H1 (cell line): ENCODE measurements at regions of chr2 and their contacts with region 1.

Region 1: DNA sequence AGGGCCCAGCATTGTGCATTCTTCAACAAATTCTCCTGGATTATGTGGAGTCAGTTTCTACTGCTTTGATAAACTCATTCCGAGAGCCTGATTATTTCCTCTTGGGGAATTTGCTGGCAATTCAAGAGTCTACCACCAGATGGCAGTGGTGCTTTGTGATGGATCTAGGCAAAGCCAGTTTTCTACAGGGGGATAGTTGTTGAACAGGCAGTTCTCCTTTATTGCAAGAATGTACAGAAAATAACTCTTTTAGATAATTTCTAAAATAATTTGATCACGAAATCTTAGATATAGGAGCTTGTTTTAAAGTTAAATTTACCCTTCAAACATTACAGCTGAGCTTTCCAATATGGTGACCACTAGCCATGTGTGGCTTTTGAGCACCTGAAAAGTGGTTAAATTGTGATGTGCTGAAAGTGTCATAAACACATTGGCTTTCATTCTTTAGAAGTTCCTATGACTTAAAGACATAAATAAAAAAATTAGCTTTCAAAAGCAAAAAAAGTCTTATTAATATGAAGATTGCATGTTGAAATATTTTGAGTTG is 66.7 kb upstream of the HAAO start:
- DNase-seq: peak; percentile 19 to 94
- H3K4me3 ChIP-seq: no peak overlapping the region
- H3K27ac ChIP-seq: no peak overlapping the region
- H3K4me1 ChIP-seq: no peaks in the 10 kb centered on the region; a peak in 1 of 7 replicates
- H3K27me3 ChIP-seq: no peaks in the 10 kb centered on the region
- CTCF ChIP-seq: peak in 2 of 3 experiments; percentile 79 to 85; a peak in 3 of 4 replicates
- EP300 ChIP-seq: no peak
- POLR2A ChIP-seq: no peak
- RAD21 ChIP-seq: peak; percentile 96 to 97

Region 2: DNA sequence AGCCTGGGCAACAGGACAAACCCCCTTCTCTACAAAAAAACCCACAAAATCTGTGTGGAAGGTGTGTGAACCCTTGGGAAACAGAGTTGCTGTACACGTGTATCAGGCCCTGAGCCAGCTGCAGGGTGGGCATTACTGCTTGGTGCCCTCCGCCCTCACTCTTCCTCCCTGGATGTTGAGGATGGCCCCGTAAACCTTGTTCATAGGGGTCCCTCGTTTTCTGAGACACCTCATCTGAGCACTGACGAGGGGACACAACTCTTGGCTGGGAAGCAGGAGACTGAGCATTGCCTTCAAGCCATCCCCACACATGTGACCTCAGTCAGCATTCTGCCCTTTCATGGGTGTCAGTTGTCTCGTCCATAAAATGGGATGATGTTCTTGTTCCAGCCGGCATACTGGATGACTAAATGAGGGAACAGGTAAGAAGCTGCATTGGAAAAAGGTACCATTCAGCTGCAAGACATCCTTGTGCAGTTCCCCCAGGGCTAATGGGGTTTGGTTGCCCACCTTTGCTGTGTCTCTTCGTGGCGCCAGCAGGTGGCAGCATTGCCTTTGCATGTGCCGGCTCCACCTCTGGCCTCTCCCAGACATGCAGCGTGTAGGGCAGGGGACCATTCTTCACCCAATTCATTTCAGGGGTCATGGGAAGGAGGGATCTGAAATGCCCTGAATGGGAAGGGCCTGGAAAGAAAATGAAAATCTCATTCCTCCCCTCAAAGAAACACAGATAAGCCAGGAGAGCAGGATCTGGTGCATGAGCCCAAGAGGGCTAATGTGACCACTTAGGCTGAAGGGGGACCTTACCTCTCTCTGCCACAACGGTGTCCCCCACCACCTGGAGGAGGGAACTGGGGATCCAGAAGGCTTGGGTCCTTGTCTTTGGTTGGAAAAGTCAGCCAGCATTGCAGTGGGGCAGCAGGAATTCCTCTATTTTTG is 30.3 kb before region 1 on chr2:
- CTCF ChIA-PET with region 1: interaction called, 119 read pairs
- POLR2A ChIA-PET with region 1: no interaction called
- DNase-seq: peak; percentile 49 to 88
- H3K4me3 ChIP-seq: no peak overlapping the region
- H3K27ac ChIP-seq: no peak overlapping the region
- H3K4me1 ChIP-seq: no peaks in the 10 kb centered on the region; a peak in 2 of 7 replicates
- H3K27me3 ChIP-seq: peaks cover 0 to 9% (median 5%) of the 10 kb centered on the region in 4 experiments; a peak in 5 of 7 replicates
- CTCF ChIP-seq: peak; percentile 97 to 99 (median 98)
- EP300 ChIP-seq: no peak
- POLR2A ChIP-seq: no peak
- RAD21 ChIP-seq: peak; percentile 94 to 96

Region 3: DNA sequence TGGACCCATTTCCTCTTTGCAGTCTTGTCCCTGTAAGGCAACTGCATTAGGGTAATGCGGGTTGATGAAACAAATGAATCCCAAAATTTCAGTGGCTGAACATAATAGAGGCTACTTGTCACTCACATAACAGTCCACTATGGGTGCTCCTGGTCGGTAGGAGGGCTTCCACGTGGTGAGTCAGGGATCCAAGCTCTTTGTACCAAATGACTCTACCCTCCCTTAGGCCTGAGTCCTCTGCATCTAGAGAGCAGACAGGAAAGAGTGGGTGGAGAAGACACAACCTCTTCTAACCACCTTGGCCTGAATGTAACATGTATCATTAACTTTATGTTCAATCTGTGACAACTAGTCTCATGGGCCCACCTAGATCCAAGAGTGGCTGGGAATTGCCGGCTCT is 19.5 kb after region 1 on chr2:
- CTCF ChIA-PET with region 1: interaction called, 24 read pairs
- POLR2A ChIA-PET with region 1: interaction called, 3 read pairs
- DNase-seq: no peak
- H3K4me3 ChIP-seq: no peak overlapping the region
- H3K27ac ChIP-seq: no peak overlapping the region
- H3K4me1 ChIP-seq: no peaks in the 10 kb centered on the region
- H3K27me3 ChIP-seq: no peaks in the 10 kb centered on the region
- CTCF ChIP-seq: no peak
- EP300 ChIP-seq: no peak
- POLR2A ChIP-seq: no peak
- RAD21 ChIP-seq: no peak

Region 4: GRCh38 chr2:42906557-42907411 is 47.7 kb after region 1 on chr2:
- CTCF ChIA-PET with region 1: interaction called, 13 read pairs
- POLR2A ChIA-PET with region 1: no interaction called
- DNase-seq: peak in 1 of 2 experiments; percentile 57
- H3K4me3 ChIP-seq: no peak overlapping the region
- H3K27ac ChIP-seq: no peak overlapping the region
- H3K4me1 ChIP-seq: peaks cover 0 to 13% (median 10%) of the 10 kb centered on the region in 4 experiments; a peak in 5 of 7 replicates
- H3K27me3 ChIP-seq: peaks cover 0 to 2% (median 0%) of the 10 kb centered on the region in 4 experiments; a peak in 1 of 7 replicates
- CTCF ChIP-seq: no peak
- EP300 ChIP-seq: no peak
- POLR2A ChIP-seq: no peak
- RAD21 ChIP-seq: no peak

Region 5: GRCh38 chr2:42928692-42929545 is 69.8 kb after region 1 on chr2:
- CTCF ChIA-PET with region 1: interaction called, 37 read pairs
- POLR2A ChIA-PET with region 1: interaction called, 3 read pairs
- DNase-seq: peak in 1 of 2 experiments; percentile 70
- H3K4me3 ChIP-seq: no peak overlapping the region; a peak in 1 of 8 replicates
- H3K27ac ChIP-seq: peak overlapping the region; percentile 56
- H3K4me1 ChIP-seq: peaks cover 29 to 49% (median 41%) of the 10 kb centered on the region in 4 experiments
- H3K27me3 ChIP-seq: no peaks in the 10 kb centered on the region
- CTCF ChIP-seq: peak in 2 of 3 experiments; percentile 69 to 77; a peak in 3 of 4 replicates
- EP300 ChIP-seq: no peak
- POLR2A ChIP-seq: no peak
- RAD21 ChIP-seq: peak; percentile 33 to 48; a peak in 3 of 4 replicates

Region 6: GRCh38 chr2:42974721-42975717 is 115.9 kb after region 1 on chr2:
- CTCF ChIA-PET with region 1: interaction called, 15 read pairs
- POLR2A ChIA-PET with region 1: no interaction called
- DNase-seq: peak; percentile 56 to 96
- H3K4me3 ChIP-seq: peak overlapping the region in 3 of 4 experiments; percentile 18 to 51 (median 34); a peak in 5 of 8 replicates
- H3K27ac ChIP-seq: no peak overlapping the region
- H3K4me1 ChIP-seq: peaks cover 0 to 7% (median 4%) of the 10 kb centered on the region in 4 experiments; a peak in 4 of 7 replicates
- H3K27me3 ChIP-seq: no peaks in the 10 kb centered on the region; a peak in 1 of 7 replicates
- CTCF ChIP-seq: peak; percentile 85 to 91 (median 89)
- EP300 ChIP-seq: 0 out of 3 replicates have a peak, but pooled peaks of 1 of the 2 experiments have one; percentile 22
- POLR2A ChIP-seq: no peak
- RAD21 ChIP-seq: peak; percentile 88 to 92

Region 7: GRCh38 chr2:43024515-43025011 is 165.5 kb after region 1 on chr2:
- CTCF ChIA-PET with region 1: interaction called, 70 read pairs
- POLR2A ChIA-PET with region 1: no interaction called
- DNase-seq: peak; percentile 38 to 89
- H3K4me3 ChIP-seq: no peak overlapping the region
- H3K27ac ChIP-seq: no peak overlapping the region
- H3K4me1 ChIP-seq: peaks cover 2 to 10% (median 3%) of the 10 kb centered on the region in 4 experiments; a peak in 4 of 7 replicates
- H3K27me3 ChIP-seq: no peaks in the 10 kb centered on the region
- CTCF ChIP-seq: peak; percentile 87 to 93 (median 90)
- EP300 ChIP-seq: no peak
- POLR2A ChIP-seq: no peak
- RAD21 ChIP-seq: peak; percentile 88 to 93